GM12878 (cell line): ENCODE measurements at regions of chr1 and their contacts with region 1.

Region 1: DNA sequence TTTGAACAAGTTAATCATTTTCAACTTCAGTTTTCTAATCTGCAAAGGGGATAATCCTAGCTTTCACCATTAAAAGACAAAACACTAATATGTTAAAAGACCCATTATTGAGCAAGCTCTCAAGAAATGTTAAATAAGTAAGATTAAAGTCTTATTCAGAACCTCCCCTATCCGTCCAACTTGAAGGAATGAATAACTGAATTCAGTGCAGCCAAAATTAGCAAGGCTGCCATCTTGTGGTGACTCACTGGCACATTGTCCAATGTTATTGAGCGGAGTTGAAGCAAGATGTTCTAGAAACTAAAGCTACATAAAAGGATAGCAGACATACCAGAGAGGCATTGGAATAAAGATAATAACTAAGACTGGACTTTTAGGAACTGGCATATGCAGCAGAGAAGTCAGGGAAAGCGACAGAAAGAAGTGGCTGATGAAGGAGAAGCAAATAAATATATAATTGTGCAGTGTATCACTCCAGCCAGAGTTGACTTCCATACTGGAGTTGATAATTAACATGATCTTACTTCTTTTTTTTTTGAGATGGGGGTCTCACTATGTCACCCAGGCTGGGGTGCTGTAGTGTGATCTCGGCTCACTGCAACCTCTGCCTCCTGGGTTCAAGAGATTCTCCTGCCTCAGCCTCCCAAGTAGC is 8.2 kb upstream of the CAP1 start:
- DNase-seq: no peak
- ATAC-seq: peak; percentile 95
- H3K4me3 ChIP-seq: no peak overlapping the region
- H3K27ac ChIP-seq: no peak overlapping the region
- H3K4me1 ChIP-seq: peaks cover 9% of the 10 kb centered on the region
- H3K27me3 ChIP-seq: no peaks in the 10 kb centered on the region
- CTCF ChIP-seq: peak; percentile 73 to 86 (median 85)
- EP300 ChIP-seq: no peak
- POLR2A ChIP-seq: no peak
- RAD21 ChIP-seq: peak; percentile 92

Region 2: GRCh38 chr1:39816415-39817090 is 215.8 kb before region 1 on chr1:
- CTCF ChIA-PET with region 1: interaction called, 32 read pairs
- POLR2A ChIA-PET with region 1: no interaction called
- RAD21 ChIA-PET with region 1: interaction called, 18 read pairs
- SMC1A ChIA-PET with region 1: interaction called, 9 read pairs
- in situ Hi-C with region 1: loop called (anchors 5 kb)
- intact Hi-C with region 1: loop called (anchors 2 kb)
- DNase-seq: peak; percentile 55
- ATAC-seq: peak; percentile 79
- H3K4me3 ChIP-seq: no peak overlapping the region
- H3K27ac ChIP-seq: peak overlapping the region; percentile 42; the same call in 1 of the 2 replicates
- H3K4me1 ChIP-seq: peaks cover 17% of the 10 kb centered on the region
- H3K27me3 ChIP-seq: no peaks in the 10 kb centered on the region
- CTCF ChIP-seq: peak; percentile 79 to 88 (median 80)
- EP300 ChIP-seq: 0 out of 4 replicates have a peak, but pooled peaks of 1 of the 2 experiments have one; percentile 32
- POLR2A ChIP-seq: no peak
- RAD21 ChIP-seq: peak; percentile 87

Region 3: DNA sequence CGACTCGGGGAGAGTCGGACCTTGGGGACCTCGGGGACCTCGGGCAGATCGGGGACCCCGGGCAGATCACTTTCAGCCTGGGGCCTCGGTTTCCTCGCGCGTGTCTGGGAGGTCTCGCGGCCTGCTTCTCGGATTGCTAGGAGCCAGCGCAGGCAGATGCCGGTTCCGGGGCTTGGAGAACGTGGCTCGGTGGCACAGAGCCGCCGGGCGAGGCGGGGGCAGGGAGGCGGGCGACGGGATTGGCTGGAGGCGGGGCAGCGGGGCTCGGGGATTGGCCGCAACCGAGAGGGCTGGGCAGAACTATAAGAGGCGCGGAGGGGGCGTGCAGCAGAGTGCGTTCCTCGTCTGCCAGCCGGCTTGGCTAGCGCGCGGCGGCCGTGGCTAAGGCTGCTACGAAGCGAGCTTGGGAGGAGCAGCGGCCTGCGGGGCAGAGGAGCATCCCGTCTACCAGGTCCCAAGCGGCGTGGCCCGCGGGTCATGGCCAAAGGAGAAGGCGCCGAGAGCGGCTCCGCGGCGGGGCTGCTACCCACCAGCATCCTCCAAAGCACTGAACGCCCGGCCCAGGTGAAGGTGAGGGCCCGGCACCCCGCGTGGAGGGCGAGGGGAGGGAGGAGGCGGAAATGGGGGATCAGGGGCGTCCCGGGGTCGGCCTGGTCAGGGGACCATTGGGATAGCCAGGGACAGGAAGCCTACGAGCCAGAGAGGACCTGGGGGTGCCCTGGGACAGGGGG is 77.4 kb before region 1 on chr1 and contains the start of gene MFSD2A:
- CTCF ChIA-PET with region 1: interaction called, 34 read pairs
- POLR2A ChIA-PET with region 1: interaction called, 4 read pairs
- RAD21 ChIA-PET with region 1: interaction called, 39 read pairs
- SMC1A ChIA-PET with region 1: interaction called, 64 read pairs
- in situ Hi-C with region 1: no loop called
- intact Hi-C with region 1: no loop called
- DNase-seq: peak; percentile 55
- ATAC-seq: peak; percentile 93
- H3K4me3 ChIP-seq: peak within 1 kb of the TSS; percentile 89
- H3K27ac ChIP-seq: peak within 1 kb of the TSS; percentile 74
- H3K4me1 ChIP-seq: peaks cover 14% of the 10 kb centered on the region
- H3K27me3 ChIP-seq: no peaks in the 10 kb centered on the region
- CTCF ChIP-seq: no peak
- EP300 ChIP-seq: no peak
- POLR2A ChIP-seq: peak; percentile 96
- RAD21 ChIP-seq: no peak
- polyA plus RNA-seq, gene MFSD2A: 0.84 to 1.9 TPM

Region 4: DNA sequence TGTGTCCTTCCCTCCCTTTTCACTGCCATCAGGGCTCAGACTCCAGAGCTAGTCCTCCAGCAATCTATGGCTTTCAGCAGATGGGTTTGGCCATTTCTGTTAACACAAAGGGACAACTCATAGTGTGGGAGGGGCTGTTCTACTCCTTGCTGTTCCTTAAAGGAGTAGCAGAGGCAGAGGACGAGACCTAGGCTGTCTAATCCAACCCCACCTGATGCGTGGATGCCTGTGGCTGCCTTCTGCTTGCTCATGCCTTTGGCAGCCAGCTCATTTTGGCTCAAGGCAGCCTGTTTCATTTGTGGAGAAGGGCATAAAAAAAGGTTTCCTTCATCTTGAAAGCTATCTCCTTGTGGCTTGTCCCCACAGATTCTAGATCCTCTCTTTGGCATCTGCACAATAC is 50.4 kb before region 1 on chr1:
- CTCF ChIA-PET with region 1: interaction called, 185 read pairs
- POLR2A ChIA-PET with region 1: no interaction called
- RAD21 ChIA-PET with region 1: interaction called, 13 read pairs
- SMC1A ChIA-PET with region 1: interaction called, 15 read pairs
- in situ Hi-C with region 1: no loop called
- intact Hi-C with region 1: no loop called
- DNase-seq: no peak
- ATAC-seq: no peak
- H3K4me3 ChIP-seq: no peak overlapping the region
- H3K27ac ChIP-seq: no peak overlapping the region
- H3K4me1 ChIP-seq: peaks cover 11% of the 10 kb centered on the region
- H3K27me3 ChIP-seq: no peaks in the 10 kb centered on the region
- CTCF ChIP-seq: no peak
- EP300 ChIP-seq: no peak
- POLR2A ChIP-seq: no peak
- RAD21 ChIP-seq: no peak

Region 5: DNA sequence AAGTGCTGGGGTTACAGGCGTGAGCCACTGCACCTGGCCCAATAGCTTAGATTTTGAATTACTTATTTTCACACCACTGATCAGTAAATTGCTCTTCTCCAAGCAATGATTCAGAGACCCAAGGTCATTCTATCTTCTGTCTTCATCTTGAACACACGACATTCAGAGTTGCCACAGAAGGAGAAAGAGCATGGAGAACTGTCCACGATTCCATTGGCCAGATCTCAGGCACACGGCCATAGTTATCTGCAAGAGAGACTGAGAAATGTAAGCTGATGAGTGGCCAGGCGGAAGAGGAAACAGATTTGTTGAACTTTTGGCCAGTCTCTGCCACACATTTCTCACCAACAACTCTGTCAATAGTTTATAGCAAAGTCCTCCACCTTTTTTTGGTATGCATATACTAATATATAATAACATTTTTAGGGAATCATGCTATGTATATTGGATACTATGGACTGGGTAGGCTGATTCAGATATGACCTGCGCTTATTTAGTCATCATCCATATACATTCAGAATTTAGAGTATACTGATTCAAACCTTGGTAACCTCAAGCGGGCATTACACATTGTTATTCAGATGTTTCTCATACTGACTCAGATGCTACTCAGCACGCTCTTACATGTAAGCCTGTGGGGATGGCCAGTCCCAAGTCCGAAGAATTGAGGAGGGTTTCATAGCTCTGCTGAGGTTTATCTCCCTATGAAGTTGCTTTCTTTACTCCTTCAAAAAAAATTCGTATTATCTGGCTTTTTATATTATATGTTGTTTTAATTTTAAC is 17.4 kb before region 1 on chr1:
- CTCF ChIA-PET with region 1: interaction called, 36 read pairs
- POLR2A ChIA-PET with region 1: interaction called, 3 read pairs
- RAD21 ChIA-PET with region 1: interaction called, 7 read pairs
- SMC1A ChIA-PET with region 1: interaction called, 8 read pairs
- in situ Hi-C with region 1: no loop called
- intact Hi-C with region 1: no loop called
- DNase-seq: no peak
- ATAC-seq: peak; percentile 68
- H3K4me3 ChIP-seq: no peak overlapping the region
- H3K27ac ChIP-seq: no peak overlapping the region
- H3K4me1 ChIP-seq: no peaks in the 10 kb centered on the region
- H3K27me3 ChIP-seq: no peaks in the 10 kb centered on the region
- CTCF ChIP-seq: no peak
- EP300 ChIP-seq: no peak
- POLR2A ChIP-seq: no peak
- RAD21 ChIP-seq: no peak

Region 6: DNA sequence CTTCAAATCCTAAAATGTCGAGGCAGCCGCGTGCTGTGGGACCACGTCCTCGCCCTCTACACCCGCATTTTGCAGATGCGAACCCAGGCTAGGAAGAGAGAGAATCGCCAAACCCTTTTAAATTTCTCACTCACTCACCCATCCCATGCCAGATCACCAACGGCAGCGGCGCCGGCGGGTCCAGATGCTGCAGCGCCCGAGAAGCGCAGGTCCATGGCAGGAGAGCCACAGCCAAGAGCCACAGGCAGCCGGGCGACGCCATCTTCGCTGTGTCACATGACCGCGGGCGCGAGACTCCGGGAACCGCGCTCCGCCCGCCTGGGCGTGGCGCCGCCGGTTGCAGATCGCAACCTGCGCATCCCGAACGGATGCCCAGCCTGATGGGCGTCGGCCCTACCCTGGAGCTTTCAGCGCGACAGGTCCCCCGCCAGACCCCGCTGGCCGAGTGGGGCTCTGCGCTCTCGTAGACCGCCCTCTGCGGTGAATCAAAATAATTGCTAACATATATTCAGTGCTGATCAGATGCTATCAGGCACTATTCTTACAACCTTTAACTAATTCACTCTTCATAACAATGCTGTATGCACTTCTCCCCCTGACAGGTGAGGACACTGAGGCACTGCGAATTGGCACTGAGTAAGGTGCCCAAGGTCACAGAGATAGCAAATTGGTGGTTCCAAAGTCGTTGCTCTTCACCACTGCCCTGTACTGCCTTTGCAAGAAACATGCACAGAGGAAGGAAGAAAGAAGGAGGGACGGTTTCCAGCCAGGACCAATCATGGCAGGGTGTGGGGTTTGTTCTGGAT is 64.8 kb after region 1 on chr1 and contains the start of gene PPT1:
- CTCF ChIA-PET with region 1: no interaction called
- POLR2A ChIA-PET with region 1: no interaction called
- RAD21 ChIA-PET with region 1: no interaction called
- SMC1A ChIA-PET with region 1: no interaction called
- in situ Hi-C with region 1: no loop called
- intact Hi-C with region 1: no loop called
- DNase-seq: peak; percentile 7
- ATAC-seq: peak; percentile 98
- H3K4me3 ChIP-seq: peak within 1 kb of the TSS; percentile 76
- H3K27ac ChIP-seq: peak within 1 kb of the TSS; percentile 3; the same call in 1 of the 2 replicates
- H3K4me1 ChIP-seq: peaks cover 4% of the 10 kb centered on the region; the same call in 1 of the 2 replicates
- H3K27me3 ChIP-seq: no peaks in the 10 kb centered on the region
- CTCF ChIP-seq: peak in 2 of 3 experiments; percentile 7 to 18; a peak in 2 of 6 replicates
- EP300 ChIP-seq: no peak
- POLR2A ChIP-seq: peak; percentile 95
- RAD21 ChIP-seq: no peak
- polyA plus RNA-seq, gene PPT1: 111 to 147 TPM

Region 7: DNA sequence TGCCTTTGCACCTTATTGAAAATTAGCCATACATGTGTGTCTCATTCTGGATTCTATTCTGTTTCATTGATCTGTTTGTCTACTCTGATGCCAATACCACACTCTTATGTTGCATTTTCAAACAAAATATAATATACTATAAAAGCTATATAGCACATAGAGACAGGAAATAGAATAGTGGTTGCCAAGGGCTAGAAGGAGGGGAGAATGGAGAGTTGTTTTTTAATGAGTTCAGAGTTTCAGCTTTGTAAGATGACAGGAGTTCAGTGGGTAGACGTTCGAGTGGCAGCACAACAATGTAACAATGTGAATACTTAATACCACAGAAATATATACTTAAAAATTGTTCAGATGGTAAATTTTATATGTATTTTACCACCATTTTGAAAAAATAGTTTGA is 145.8 kb after region 1 on chr1:
- CTCF ChIA-PET with region 1: no interaction called
- POLR2A ChIA-PET with region 1: no interaction called
- RAD21 ChIA-PET with region 1: no interaction called
- SMC1A ChIA-PET with region 1: no interaction called
- in situ Hi-C with region 1: no loop called
- intact Hi-C with region 1: no loop called
- DNase-seq: no peak
- ATAC-seq: no peak
- H3K4me3 ChIP-seq: no peak overlapping the region
- H3K27ac ChIP-seq: no peak overlapping the region
- H3K4me1 ChIP-seq: no peaks in the 10 kb centered on the region; the same call in 1 of the 2 replicates
- H3K27me3 ChIP-seq: no peaks in the 10 kb centered on the region
- CTCF ChIP-seq: no peak
- EP300 ChIP-seq: no peak
- POLR2A ChIP-seq: no peak
- RAD21 ChIP-seq: no peak